ENCODE measurements at regions of chr3 and their contacts with region 1.

Region 1: GRCh38 chr3:71006810-71007785 is 576.4 kb downstream of the FOXP1 start:
- DNase-seq: peak; percentile 48 to 62 (median 55)
- H3K4me3 ChIP-seq: no peak overlapping the region
- H3K27ac ChIP-seq: no peak overlapping the region
- H3K4me1 ChIP-seq: peaks cover 6 to 26% (median 16%) of the 10 kb centered on the region in 4 experiments
- H3K27me3 ChIP-seq: no peaks in the 10 kb centered on the region

Region 2: DNA sequence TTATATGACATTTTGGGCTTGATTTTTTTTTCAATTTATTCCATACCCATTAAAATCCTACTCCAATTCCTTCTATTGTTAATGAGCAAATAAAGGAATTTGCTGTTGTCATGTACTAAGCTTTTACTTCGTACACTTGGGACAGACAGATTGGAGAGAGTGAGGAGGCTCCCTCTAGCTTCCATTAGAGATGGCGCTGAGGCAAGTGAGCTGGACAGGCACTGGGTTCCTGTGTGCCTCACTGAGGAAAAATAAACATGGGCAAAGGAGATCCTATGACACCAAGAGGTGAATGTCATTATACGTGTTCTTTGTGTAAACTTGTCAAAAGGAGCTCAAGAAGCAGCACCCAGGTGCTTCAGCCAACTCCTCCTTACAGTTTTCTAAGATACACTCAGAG is 253.5 kb before region 1 on chr3:
- CTCF ChIA-PET with region 1: no interaction called
- POLR2A ChIA-PET with region 1: no interaction called
- DNase-seq: peak in 1 of 3 donors; percentile 4
- H3K4me3 ChIP-seq: no peak overlapping the region
- H3K27ac ChIP-seq: no peak overlapping the region
- H3K4me1 ChIP-seq: no peaks in the 10 kb centered on the region
- H3K27me3 ChIP-seq: no peaks in the 10 kb centered on the region

Region 3: GRCh38 chr3:70856414-70857162 is 150.5 kb before region 1 on chr3:
- CTCF ChIA-PET with region 1: no interaction called
- POLR2A ChIA-PET with region 1: no interaction called
- DNase-seq: peak in 1 of 3 donors; percentile 6
- H3K4me3 ChIP-seq: no peak overlapping the region
- H3K27ac ChIP-seq: no peak overlapping the region
- H3K4me1 ChIP-seq: no peaks in the 10 kb centered on the region
- H3K27me3 ChIP-seq: no peaks in the 10 kb centered on the region

Region 4: GRCh38 chr3:70899816-70900215 is 107.3 kb before region 1 on chr3:
- CTCF ChIA-PET with region 1: no interaction called
- POLR2A ChIA-PET with region 1: no interaction called
- DNase-seq: no peak
- H3K4me3 ChIP-seq: no peak overlapping the region
- H3K27ac ChIP-seq: no peak overlapping the region
- H3K4me1 ChIP-seq: no peaks in the 10 kb centered on the region
- H3K27me3 ChIP-seq: no peaks in the 10 kb centered on the region

Region 5: GRCh38 chr3:71069797-71070196 is 62.7 kb after region 1 on chr3:
- CTCF ChIA-PET with region 1: interaction called, 51 read pairs
- POLR2A ChIA-PET with region 1: no interaction called
- DNase-seq: peak; percentile 64 to 77 (median 76)
- H3K4me3 ChIP-seq: no peak overlapping the region
- H3K27ac ChIP-seq: no peak overlapping the region
- H3K4me1 ChIP-seq: peaks cover 17 to 63% (median 53%) of the 10 kb centered on the region in 4 experiments
- H3K27me3 ChIP-seq: no peaks in the 10 kb centered on the region